ENCODE measurements at regions of chr2 and their contacts with region 1.

Region 1: DNA sequence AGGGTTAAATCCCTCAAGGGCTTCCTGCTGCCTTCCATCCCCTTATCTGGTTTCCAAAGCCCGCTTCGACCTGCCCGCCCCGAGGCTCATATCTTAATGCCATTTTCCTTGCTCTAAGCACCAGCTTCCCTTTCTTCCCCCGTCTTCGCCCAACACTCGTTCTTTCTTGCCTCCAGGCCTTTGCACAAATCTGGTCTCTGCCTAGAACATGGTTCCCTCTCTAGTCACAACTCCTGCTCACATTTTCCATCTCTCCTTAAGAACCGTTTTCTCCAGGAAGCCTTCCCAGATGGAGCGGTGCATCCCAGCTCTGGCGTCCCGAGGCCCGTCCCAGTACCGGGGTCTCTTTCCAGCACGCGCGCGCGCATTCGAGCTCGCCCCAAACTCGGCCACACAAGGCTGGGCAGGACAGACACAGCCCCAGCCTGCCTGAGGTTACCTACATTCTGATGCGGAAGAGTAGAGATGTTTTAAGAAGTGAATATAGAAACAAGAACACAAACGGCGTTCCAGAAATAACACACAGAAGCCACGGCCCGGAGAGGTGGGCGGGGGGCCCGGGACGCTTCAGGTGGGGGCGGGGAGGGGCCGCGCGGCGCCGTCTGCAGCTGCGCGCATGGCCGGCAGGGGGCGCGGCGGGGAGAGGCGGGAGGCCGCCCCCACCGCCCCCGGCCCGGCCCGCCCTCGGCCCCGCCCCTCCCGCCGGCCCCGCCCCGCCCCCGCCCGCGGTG is at the start of gene DGKD:
- DNase-seq: peak; percentile 74
- ATAC-seq: peak; percentile 78
- H3K4me3 Mint-ChIP-seq: peak within 1 kb of the TSS; percentile 93
- H3K27ac Mint-ChIP-seq: peak within 1 kb of the TSS; percentile 100
- H3K4me1 Mint-ChIP-seq: peaks cover 88% of the 10 kb centered on the region
- H3K27me3 Mint-ChIP-seq: no peaks in the 10 kb centered on the region
- CTCF ChIP-seq: no peak
- total RNA-seq, gene DGKD: 140 and 188 TPM in 2 replicates

Region 2: GRCh38 chr2:233242231-233242927 is 111.6 kb before region 1 on chr2:
- CTCF ChIA-PET with region 1: no interaction called
- POLR2A ChIA-PET with region 1: no interaction called
- intact Hi-C with region 1: no loop called
- DNase-seq: no peak
- ATAC-seq: peak; percentile 79
- H3K4me3 Mint-ChIP-seq: no peak overlapping the region
- H3K27ac Mint-ChIP-seq: peak overlapping the region; percentile 12
- H3K4me1 Mint-ChIP-seq: peaks cover 34% of the 10 kb centered on the region
- H3K27me3 Mint-ChIP-seq: no peaks in the 10 kb centered on the region
- CTCF ChIP-seq: no peak

Region 3: GRCh38 chr2:233267516-233268245 is 86.3 kb before region 1 on chr2:
- CTCF ChIA-PET with region 1: interaction called, 3 read pairs
- POLR2A ChIA-PET with region 1: interaction called, 8 read pairs
- intact Hi-C with region 1: loop called (anchors 5 kb)
- DNase-seq: peak; percentile 20
- ATAC-seq: peak; percentile 91
- H3K4me3 Mint-ChIP-seq: peak overlapping the region; percentile 56
- H3K27ac Mint-ChIP-seq: peak overlapping the region; percentile 82
- H3K4me1 Mint-ChIP-seq: peaks cover 51% of the 10 kb centered on the region
- H3K27me3 Mint-ChIP-seq: no peaks in the 10 kb centered on the region
- CTCF ChIP-seq: no peak

Region 4: DNA sequence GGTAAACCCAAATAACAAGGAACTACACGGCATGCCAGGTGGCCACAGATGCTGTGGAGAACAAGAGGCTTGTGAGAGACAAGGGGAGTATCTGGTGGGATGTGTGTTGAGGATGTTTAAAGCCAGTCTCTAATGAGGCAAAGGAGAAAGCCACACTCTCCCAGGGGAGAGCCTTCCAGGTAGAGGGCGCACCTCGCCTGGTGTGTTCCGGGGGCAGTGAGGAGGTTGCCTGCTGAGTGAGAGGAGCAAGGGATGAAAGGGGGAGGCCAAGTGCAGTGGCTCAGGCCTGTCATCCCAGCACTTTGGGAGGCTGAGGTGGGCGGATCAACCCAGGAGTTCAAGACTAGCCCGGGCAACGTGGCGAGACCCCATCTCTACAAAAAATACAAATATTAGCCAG is 30.1 kb before region 1 on chr2:
- CTCF ChIA-PET with region 1: interaction called, 3 read pairs
- POLR2A ChIA-PET with region 1: interaction called, 15 read pairs
- intact Hi-C with region 1: no loop called
- DNase-seq: no peak
- ATAC-seq: no peak
- H3K4me3 Mint-ChIP-seq: no peak overlapping the region
- H3K27ac Mint-ChIP-seq: peak overlapping the region; percentile 57
- H3K4me1 Mint-ChIP-seq: peaks cover 56% of the 10 kb centered on the region
- H3K27me3 Mint-ChIP-seq: no peaks in the 10 kb centered on the region
- CTCF ChIP-seq: no peak

Region 5: GRCh38 chr2:233338046-233338445 is 15.9 kb before region 1 on chr2:
- CTCF ChIA-PET with region 1: interaction called, 7 read pairs
- POLR2A ChIA-PET with region 1: interaction called, 93 read pairs
- intact Hi-C with region 1: loop called (anchors 1 kb)
- DNase-seq: no peak
- ATAC-seq: no peak
- H3K4me3 Mint-ChIP-seq: peak overlapping the region; percentile 44
- H3K27ac Mint-ChIP-seq: peak overlapping the region; percentile 18
- H3K4me1 Mint-ChIP-seq: peaks cover 77% of the 10 kb centered on the region
- H3K27me3 Mint-ChIP-seq: no peaks in the 10 kb centered on the region
- CTCF ChIP-seq: no peak

Region 6: DNA sequence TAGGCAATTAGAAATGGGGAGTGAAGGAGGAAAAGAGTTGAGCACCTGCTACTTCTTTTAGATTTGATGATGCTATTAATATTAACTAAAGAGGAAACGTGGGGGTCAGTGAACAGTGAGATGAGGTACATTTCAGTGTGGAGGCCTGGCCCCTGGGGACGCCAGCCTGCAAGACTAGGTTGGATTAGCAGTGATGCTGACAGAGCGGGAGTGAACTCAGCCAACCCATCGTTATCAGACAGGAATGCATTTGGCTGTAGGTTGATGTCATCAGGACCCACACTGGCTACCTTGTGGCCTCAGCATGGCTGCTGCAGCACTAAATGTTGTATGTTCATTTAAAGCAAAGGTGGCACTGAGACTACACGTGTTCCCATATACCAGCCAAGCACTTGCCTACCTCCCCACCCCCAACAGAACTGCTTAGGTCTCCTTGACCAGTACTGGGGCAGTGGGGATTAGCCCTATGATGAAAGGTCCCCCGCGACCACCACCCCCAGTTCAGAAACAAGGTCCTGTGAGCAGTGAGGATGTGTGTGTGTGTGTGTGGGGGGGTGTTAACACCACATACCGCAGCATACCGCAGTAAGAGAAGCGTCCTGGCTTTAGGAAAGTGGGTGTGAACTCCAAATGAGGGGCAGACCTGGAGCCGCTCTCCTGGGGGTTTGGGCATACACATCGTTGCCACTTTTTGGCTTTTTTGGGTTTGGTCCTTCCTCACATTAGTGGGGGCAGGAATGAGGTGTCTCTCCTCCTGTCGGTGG is 26.4 kb after region 1 on chr2:
- CTCF ChIA-PET with region 1: interaction called, 12 read pairs
- POLR2A ChIA-PET with region 1: interaction called, 60 read pairs
- intact Hi-C with region 1: loop called (anchors 1 kb)
- DNase-seq: peak; percentile 50
- ATAC-seq: peak; percentile 83
- H3K4me3 Mint-ChIP-seq: peak overlapping the region; percentile 67
- H3K27ac Mint-ChIP-seq: peak overlapping the region; percentile 91
- H3K4me1 Mint-ChIP-seq: peaks cover 83% of the 10 kb centered on the region
- H3K27me3 Mint-ChIP-seq: no peaks in the 10 kb centered on the region
- CTCF ChIP-seq: no peak

Region 7: DNA sequence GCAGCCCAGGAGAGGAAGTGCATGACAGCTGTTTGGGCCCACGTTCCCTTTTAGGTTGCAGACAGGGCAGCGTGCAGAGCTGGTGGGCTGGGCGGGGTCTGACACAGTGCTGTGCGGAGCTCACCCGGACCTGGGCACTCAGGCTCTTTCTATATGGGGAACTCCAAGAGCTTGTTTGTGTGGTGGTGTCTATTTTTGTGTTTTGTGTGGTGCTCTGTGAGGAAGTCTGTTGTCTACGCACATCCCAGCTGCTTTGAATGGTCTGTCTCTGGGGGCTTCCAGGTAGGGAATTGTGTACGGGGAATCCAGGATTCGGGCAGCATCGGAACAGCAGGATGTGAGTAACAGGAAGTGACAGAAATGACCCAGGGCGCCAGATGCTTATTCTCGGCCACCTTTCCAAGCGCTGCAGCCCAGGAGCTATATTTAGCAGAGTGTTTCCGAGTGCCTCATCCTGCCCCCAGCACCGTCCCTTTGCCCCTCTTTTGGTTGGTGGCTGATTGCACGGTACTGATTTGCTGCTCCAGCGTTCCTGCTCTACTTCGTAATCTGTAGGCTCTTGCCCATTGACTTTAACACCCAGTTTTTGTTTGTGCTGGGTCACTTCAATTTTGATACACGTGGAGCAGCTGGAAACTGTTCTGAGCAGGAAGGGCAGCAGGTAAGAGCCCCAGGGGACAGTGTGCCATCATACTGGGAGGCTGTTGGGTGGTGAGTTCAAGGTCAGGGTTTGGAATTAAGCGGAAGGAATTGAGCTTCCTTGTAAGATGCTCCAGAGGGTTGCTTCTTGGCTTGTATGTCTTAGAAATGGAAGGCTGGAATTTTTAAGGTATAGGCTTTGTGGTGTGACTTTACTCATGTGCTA is 65.1 kb after region 1 on chr2:
- CTCF ChIA-PET with region 1: no interaction called
- POLR2A ChIA-PET with region 1: interaction called, 11 read pairs
- intact Hi-C with region 1: loop called (anchors 2 kb)
- DNase-seq: peak; percentile 56
- ATAC-seq: peak; percentile 69
- H3K4me3 Mint-ChIP-seq: peak overlapping the region; percentile 87
- H3K27ac Mint-ChIP-seq: peak overlapping the region; percentile 97
- H3K4me1 Mint-ChIP-seq: peaks cover 99% of the 10 kb centered on the region
- H3K27me3 Mint-ChIP-seq: no peaks in the 10 kb centered on the region
- CTCF ChIP-seq: no peak